Esophagus muscularis mucosa (tissue), 4 donors: ENCODE measurements at regions of chr1 and their contacts with region 1.

Region 1: DNA sequence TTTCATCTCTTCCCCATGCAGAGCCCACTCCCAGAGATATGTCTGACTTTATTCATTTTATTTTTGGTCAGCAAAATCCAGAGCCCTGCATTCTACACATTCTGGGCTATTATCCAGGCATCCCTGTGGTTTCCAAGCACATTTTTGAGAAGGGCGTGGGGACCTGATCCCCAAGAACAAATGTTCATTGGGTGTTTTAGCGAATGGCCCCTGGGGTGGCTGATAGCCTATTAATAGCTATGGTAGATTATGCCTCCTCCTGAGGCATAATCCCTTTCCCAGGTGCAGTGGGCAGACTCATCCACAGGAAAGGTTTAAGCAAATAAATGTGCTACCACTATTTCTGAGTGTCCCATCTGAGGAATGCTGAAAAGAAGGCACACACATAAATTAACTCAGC is 511.8 kb upstream of the USP24 start:
- DNase-seq: no peak
- H3K4me3 ChIP-seq: no peak overlapping the region
- H3K27ac ChIP-seq: no peak overlapping the region
- H3K4me1 ChIP-seq: peaks cover 0 to 35% (median 32%) of the 10 kb centered on the region in 4 donors
- H3K27me3 ChIP-seq: no peaks in the 10 kb centered on the region
- CTCF ChIP-seq: no peak
- EP300 ChIP-seq: no peak
- POLR2A ChIP-seq: no peak

Region 2: DNA sequence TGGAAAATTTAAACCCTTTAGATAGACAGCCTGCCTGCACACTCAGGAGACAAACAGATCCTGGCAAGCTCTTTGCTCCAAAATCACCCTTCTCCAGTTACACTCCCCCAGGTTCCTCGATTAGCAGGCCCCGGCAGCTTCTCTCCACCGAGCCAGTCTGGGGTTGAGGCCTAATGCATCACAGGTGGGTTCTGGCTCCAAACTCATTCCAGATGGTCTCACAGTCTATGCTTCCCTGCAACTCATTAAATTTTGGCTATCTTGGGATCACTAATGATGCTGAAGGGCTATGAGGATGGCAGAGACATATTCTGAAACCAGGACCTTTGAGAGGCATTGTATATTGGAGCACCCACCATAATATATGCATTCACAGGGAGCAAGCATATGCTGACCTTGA is 48.0 kb after region 1 on chr1:
- intact Hi-C with region 1: loop called (anchors 2 kb)
- DNase-seq: no peak
- H3K4me3 ChIP-seq: no peak overlapping the region
- H3K27ac ChIP-seq: no peak overlapping the region
- H3K4me1 ChIP-seq: peaks cover 0 to 11% (median 5%) of the 10 kb centered on the region in 4 donors
- H3K27me3 ChIP-seq: no peaks in the 10 kb centered on the region
- CTCF ChIP-seq: no peak
- EP300 ChIP-seq: no peak
- POLR2A ChIP-seq: no peak

Region 3: DNA sequence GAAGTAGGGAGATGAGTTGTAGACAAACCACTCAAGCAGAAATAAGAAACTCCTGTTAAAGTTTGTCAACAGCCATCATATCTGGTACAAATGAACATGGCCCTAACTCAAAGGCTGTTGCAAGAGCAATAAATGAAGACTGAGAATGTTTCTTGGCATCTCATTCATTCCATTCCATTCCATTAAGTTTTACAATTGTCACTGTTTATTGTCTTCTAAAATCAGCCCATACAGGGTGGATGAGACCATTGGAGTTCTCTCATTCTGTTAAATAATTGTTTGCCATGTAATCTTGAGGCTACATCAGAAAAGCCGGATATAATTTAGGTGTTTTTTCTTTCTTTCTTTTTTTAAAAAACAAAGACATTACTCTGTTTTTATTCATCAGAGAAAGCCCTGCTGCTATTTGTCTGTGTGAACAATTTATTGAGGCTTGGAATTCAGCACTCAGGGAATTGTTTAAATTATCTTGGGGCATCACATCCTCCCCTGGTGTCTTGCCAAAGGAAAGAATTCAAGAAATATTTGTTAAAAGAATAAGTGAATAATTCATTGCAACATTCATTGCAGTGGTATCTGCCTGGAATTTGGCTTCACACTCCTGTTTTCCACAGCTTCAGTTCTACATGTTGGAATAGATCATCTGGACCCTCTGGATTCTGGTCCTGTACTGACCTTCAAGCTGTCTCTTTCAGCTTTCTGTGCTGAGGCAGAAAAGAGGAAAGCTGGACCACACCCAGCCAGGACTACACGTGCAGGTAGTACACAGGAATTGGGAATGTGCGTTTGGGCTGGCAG is 247.9 kb after region 1 on chr1:
- intact Hi-C with region 1: loop called (anchors 10 kb)
- DNase-seq: no peak
- H3K4me3 ChIP-seq: no peak overlapping the region
- H3K27ac ChIP-seq: peak overlapping the region; percentile 25 to 75 (median 61)
- H3K4me1 ChIP-seq: peaks cover 0 to 36% (median 30%) of the 10 kb centered on the region in 4 donors
- H3K27me3 ChIP-seq: no peaks in the 10 kb centered on the region
- CTCF ChIP-seq: no peak
- EP300 ChIP-seq: no peak
- POLR2A ChIP-seq: no peak

Region 4: DNA sequence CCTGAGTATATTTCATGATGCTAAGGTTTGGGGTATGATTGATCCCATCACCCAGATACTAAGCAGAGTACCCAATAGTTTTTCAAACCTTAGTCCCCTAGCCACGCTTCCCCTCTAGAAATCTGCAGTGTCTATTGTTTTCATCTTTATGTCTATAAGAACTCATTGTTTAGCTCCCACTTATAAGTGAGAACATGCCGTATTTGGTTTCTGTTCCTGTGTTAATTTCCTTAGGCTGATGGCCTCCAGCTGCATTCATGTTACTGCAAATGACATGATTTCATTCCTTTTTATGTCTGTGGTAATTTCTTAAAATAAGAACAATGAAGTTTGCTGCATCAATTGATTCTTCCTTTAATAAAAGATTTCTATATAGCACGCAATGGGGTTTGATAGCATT is 551.1 kb after region 1 on chr1:
- intact Hi-C with region 1: no loop called
- DNase-seq: no peak
- H3K4me3 ChIP-seq: no peak overlapping the region
- H3K27ac ChIP-seq: no peak overlapping the region
- H3K4me1 ChIP-seq: no peaks in the 10 kb centered on the region
- H3K27me3 ChIP-seq: no peaks in the 10 kb centered on the region
- CTCF ChIP-seq: no peak
- EP300 ChIP-seq: no peak
- POLR2A ChIP-seq: no peak